CD8-positive, alpha-beta T cell (primary cell): ENCODE measurements at regions of chr1 and their contacts with region 1.

Region 1: GRCh38 chr1:108643492-108644335 is 17.2 kb downstream of the HENMT1 start:
- DNase-seq: peak in 6 of 9 experiments; percentile 27 to 87 (median 58)
- ATAC-seq: peak; percentile 15
- H3K4me3 ChIP-seq: no peak overlapping the region
- H3K4me3 Mint-ChIP-seq: peak overlapping the region; percentile 10
- H3K27ac ChIP-seq: peak overlapping the region; percentile 77 to 92
- H3K27ac Mint-ChIP-seq: peak overlapping the region; percentile 100
- H3K4me1 ChIP-seq: peaks cover 69% of the 10 kb centered on the region
- H3K4me1 Mint-ChIP-seq: peaks cover 77% of the 10 kb centered on the region
- H3K27me3 ChIP-seq: no peaks in the 10 kb centered on the region
- H3K27me3 Mint-ChIP-seq: no peaks in the 10 kb centered on the region
- CTCF ChIP-seq: peak; percentile 69

Region 2: DNA sequence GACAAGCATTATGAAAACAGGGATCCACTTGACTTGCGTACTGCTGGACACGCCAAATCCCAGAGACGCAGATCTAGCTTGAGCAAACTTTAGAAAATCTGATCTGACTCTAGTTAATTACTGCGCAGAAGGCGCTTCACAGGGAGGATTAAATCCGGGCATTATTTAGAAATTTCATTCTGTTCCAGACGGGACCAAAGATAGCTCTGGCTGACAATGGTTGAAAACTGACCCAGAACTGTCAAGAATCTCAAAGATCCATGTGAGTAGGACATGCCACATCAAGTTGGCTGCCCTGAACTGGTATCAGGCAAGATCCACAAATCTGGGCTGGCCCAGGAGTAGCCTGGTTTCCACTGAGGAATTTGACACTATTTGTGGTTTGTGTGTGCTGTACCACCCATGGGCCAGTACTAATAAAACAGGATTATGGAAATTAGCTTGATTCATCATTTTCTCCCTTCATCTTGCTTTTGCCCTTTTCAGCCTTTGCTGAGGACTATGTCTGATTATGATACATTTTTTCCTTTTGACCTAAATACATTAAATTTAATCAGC is 849.7 kb before region 1 on chr1:
- CTCF ChIA-PET with region 1: no interaction called
- POLR2A ChIA-PET with region 1: no interaction called
- intact Hi-C with region 1: loop called in 1 of 2 experiments (anchors 5 kb)
- DNase-seq: no peak
- ATAC-seq: no peak
- H3K4me3 ChIP-seq: no peak overlapping the region
- H3K4me3 Mint-ChIP-seq: no peak overlapping the region
- H3K27ac ChIP-seq: no peak overlapping the region
- H3K27ac Mint-ChIP-seq: no peak overlapping the region
- H3K4me1 ChIP-seq: peaks cover 4% of the 10 kb centered on the region
- H3K4me1 Mint-ChIP-seq: peaks cover 29% of the 10 kb centered on the region
- H3K27me3 ChIP-seq: no peaks in the 10 kb centered on the region
- H3K27me3 Mint-ChIP-seq: no peaks in the 10 kb centered on the region
- CTCF ChIP-seq: no peak

Region 3: DNA sequence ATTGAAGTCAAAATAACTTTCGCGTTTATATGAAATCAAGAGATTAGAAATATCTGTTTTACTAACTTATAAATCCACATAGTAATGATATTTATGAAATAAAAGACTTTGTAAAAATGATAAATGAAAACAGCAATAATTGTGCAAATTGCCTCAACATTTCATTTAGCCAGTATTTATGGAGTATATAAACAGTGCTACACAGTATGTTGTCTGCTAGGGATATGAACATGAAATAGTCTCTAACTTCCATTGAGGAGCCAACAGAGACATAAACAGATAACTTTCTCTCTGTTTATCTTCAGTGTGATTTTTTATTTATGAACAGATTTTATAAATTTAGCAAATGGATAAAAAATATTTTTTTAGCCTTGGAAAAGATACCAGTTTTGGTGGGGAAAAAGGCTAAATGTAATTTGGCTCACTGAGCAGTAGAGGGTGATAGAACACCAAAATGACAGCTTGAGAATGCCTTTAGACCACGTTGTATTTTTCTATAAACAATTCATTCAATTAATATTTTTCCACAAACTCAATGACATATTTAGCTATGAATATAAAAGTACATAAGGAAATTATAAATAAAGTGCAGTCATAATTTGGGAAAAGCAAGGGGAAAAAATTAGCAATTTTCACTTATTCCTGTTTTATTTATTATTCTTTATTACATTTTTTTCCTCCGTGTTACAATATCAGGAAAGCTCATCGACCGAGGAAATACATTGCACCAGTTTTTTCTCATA is 131.3 kb before region 1 on chr1:
- CTCF ChIA-PET with region 1: interaction called, 75 read pairs
- POLR2A ChIA-PET with region 1: interaction called, 16 read pairs
- intact Hi-C with region 1: loop called (anchors 1 kb)
- DNase-seq: peak in 2 of 9 experiments; percentile 65 to 75
- ATAC-seq: peak; percentile 69
- H3K4me3 ChIP-seq: no peak overlapping the region
- H3K4me3 Mint-ChIP-seq: no peak overlapping the region
- H3K27ac ChIP-seq: no peak overlapping the region
- H3K27ac Mint-ChIP-seq: no peak overlapping the region
- H3K4me1 ChIP-seq: no peaks in the 10 kb centered on the region
- H3K4me1 Mint-ChIP-seq: no peaks in the 10 kb centered on the region
- H3K27me3 ChIP-seq: no peaks in the 10 kb centered on the region
- H3K27me3 Mint-ChIP-seq: peaks cover 21% of the 10 kb centered on the region
- CTCF ChIP-seq: peak; percentile 99

Region 4: DNA sequence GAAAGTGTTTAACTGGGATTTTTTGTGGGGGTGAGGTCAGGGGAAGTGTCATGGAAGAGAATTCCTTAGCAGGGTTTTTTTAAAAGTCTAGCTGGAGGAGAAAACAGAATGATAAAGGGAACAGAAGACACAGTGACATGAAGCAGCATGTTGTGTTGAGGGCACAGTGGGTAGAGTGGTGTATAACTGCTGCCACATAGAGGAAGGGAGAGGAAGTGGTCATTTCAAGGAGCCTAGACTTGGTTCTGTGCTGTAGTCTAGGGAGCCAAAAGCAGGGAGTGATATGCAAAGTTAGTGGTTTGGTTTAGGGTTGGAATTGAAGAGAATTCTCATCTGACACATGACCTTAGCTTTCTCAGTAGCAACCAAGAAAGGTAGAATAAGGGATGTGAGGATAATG is 73.6 kb before region 1 on chr1:
- CTCF ChIA-PET with region 1: interaction called, 14 read pairs
- POLR2A ChIA-PET with region 1: no interaction called
- intact Hi-C with region 1: no loop called
- DNase-seq: peak in 3 of 9 experiments; percentile 11 to 69 (median 57)
- ATAC-seq: peak; percentile 95
- H3K4me3 ChIP-seq: no peak overlapping the region
- H3K4me3 Mint-ChIP-seq: no peak overlapping the region
- H3K27ac ChIP-seq: no peak overlapping the region
- H3K27ac Mint-ChIP-seq: no peak overlapping the region
- H3K4me1 ChIP-seq: peaks cover 5% of the 10 kb centered on the region
- H3K4me1 Mint-ChIP-seq: peaks cover 6% of the 10 kb centered on the region
- H3K27me3 ChIP-seq: no peaks in the 10 kb centered on the region
- H3K27me3 Mint-ChIP-seq: no peaks in the 10 kb centered on the region
- CTCF ChIP-seq: peak; percentile 57

Region 5: GRCh38 chr1:108661030-108661620 is 17.4 kb after region 1 on chr1 and contains the start of gene HENMT1:
- CTCF ChIA-PET with region 1: interaction called, 38 read pairs
- POLR2A ChIA-PET with region 1: interaction called, 275 read pairs
- intact Hi-C with region 1: loop called (anchors 1 kb)
- DNase-seq: peak; percentile 62 to 95 (median 82)
- ATAC-seq: peak; percentile 84
- H3K4me3 ChIP-seq: peak within 1 kb of the TSS; percentile 57 to 66
- H3K4me3 Mint-ChIP-seq: peak within 1 kb of the TSS; percentile 81
- H3K27ac ChIP-seq: peak within 1 kb of the TSS; percentile 90 to 98
- H3K27ac Mint-ChIP-seq: peak within 1 kb of the TSS; percentile 97
- H3K4me1 ChIP-seq: peaks cover 24% of the 10 kb centered on the region
- H3K4me1 Mint-ChIP-seq: peaks cover 50% of the 10 kb centered on the region
- H3K27me3 ChIP-seq: no peaks in the 10 kb centered on the region
- H3K27me3 Mint-ChIP-seq: no peaks in the 10 kb centered on the region
- CTCF ChIP-seq: no peak
- total RNA-seq, gene HENMT1: 7.5 to 8.3 TPM

Region 6: DNA sequence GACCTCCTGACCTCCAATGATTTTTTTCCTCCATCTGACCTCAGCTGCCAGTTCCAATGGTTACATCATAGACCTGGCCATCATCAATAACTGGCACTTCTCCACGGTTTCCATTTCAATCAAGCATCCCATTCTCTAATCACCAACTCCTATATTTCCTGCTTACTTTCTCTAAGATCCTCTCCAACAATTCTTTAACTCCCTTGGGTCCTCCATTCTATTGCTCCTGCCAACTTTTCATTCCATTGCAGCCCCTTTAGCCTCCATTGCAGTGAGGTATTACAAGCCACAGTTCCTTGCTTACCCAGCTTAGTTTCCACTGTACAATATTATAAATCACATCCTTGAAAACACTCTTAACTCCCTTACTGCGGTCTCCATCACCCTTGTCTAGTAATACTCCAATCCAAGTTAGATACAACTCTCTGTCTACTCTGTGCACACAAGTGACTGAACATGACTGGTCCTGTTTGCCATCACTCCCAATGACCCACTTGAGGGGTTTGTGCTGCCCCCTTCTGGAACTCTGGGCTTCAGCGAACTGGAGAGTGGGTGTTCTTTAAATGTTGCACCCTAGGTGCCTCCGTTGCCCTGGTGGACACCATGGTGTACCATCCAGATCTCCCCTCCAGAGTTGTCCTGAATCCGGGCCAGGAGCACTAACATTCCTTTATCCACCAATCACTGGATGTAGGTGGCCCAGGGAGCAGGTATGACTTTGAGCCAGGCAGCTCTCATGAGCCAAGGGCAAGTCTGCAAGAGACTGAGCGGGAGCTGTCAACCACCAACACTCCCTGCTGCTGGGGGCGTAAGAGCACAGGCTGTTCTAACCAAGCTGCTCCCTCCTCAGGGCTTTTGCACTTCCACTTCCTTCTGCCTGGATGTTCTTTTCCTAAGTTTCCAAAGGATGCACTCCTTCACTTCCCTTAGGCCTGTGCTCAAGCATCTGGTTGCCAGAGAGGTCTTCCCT is 65.3 kb after region 1 on chr1:
- CTCF ChIA-PET with region 1: interaction called, 23 read pairs
- POLR2A ChIA-PET with region 1: interaction called, 7 read pairs
- intact Hi-C with region 1: loop called in 1 of 2 experiments (anchors 1 kb)
- DNase-seq: peak; percentile 44 to 83 (median 71)
- ATAC-seq: peak; percentile 83
- H3K4me3 ChIP-seq: no peak overlapping the region
- H3K4me3 Mint-ChIP-seq: no peak overlapping the region
- H3K27ac ChIP-seq: no peak overlapping the region
- H3K27ac Mint-ChIP-seq: no peak overlapping the region
- H3K4me1 ChIP-seq: peaks cover 16% of the 10 kb centered on the region
- H3K4me1 Mint-ChIP-seq: peaks cover 30% of the 10 kb centered on the region
- H3K27me3 ChIP-seq: no peaks in the 10 kb centered on the region
- H3K27me3 Mint-ChIP-seq: no peaks in the 10 kb centered on the region
- CTCF ChIP-seq: peak; percentile 57

Region 7: DNA sequence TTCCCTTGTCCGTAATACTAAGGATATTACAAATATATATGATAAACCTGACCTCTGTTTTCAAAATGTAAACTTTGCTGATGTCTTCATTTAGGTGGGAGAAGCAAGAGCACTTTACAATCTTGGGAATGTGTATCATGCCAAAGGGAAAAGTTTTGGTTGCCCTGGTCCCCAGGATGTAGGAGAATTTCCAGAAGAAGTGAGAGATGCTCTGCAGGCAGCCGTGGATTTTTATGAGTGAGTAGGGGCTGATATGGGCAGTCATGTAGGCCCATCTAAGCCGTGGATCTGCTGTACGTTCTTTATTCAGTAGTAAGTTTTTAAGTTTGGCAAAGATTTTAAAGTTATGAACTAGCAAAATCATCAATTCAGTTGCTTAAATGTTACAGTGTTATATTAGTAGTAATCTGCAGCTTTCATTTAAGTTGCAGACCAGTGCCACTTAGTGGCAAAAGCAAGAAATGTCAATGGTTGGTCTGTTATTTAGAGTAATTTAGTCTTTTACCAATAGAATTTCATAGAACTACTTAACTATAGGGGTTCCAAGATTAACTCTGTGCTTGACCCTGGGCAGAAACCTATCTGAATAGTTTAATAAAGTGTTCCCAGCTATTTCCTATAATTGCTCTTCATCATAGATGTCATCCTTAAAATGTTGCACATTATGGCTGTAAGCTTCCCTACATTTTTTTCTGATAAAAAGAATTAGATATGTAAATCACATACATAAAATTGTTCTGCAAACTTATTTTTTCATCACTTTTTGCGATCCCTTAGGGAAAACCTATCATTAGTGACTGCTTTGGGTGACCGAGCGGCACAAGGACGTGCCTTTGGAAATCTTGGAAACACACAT is 254.4 kb after region 1 on chr1:
- CTCF ChIA-PET with region 1: interaction called, 12 read pairs
- POLR2A ChIA-PET with region 1: no interaction called
- intact Hi-C with region 1: loop called in 1 of 2 experiments (anchors 5 kb)
- DNase-seq: peak in 5 of 9 experiments; percentile 9 to 74 (median 35)
- ATAC-seq: peak; percentile 78
- H3K4me3 ChIP-seq: no peak overlapping the region
- H3K4me3 Mint-ChIP-seq: no peak overlapping the region
- H3K27ac ChIP-seq: no peak overlapping the region
- H3K27ac Mint-ChIP-seq: no peak overlapping the region
- H3K4me1 ChIP-seq: no peaks in the 10 kb centered on the region
- H3K4me1 Mint-ChIP-seq: no peaks in the 10 kb centered on the region
- H3K27me3 ChIP-seq: no peaks in the 10 kb centered on the region
- H3K27me3 Mint-ChIP-seq: peaks cover 2% of the 10 kb centered on the region
- CTCF ChIP-seq: peak; percentile 68

Region 8: DNA sequence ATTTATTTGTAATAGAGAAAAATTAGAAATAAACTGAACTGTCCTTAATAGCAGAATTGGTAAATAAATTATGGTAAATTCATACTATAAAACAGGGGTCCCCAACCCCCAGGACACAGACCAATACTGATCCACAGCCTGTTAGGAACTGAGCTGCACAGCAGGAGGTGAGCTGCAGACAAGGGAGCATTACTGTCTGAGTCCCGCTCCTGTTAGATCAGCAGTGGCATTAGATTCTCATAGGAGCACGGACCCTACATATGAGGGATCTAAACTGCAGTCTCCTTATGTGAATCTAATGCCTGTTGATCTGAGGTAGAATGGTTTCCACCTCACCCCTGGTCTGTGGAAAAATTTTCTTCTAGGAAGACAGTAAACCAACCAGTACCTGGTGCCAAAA is 390.7 kb after region 1 on chr1:
- CTCF ChIA-PET with region 1: no interaction called
- POLR2A ChIA-PET with region 1: no interaction called
- intact Hi-C with region 1: no loop called
- DNase-seq: no peak
- ATAC-seq: no peak
- H3K4me3 ChIP-seq: no peak overlapping the region
- H3K4me3 Mint-ChIP-seq: no peak overlapping the region
- H3K27ac ChIP-seq: no peak overlapping the region
- H3K27ac Mint-ChIP-seq: no peak overlapping the region
- H3K4me1 ChIP-seq: no peaks in the 10 kb centered on the region
- H3K4me1 Mint-ChIP-seq: peaks cover 2% of the 10 kb centered on the region
- H3K27me3 ChIP-seq: no peaks in the 10 kb centered on the region
- H3K27me3 Mint-ChIP-seq: no peaks in the 10 kb centered on the region
- CTCF ChIP-seq: no peak